Posterior vena cava (tissue), 2 donors: ENCODE measurements at regions of chr21 and their contacts with region 1.

Region 1: GRCh38 chr21:33441489-33442477 is 38.0 kb downstream of the TMEM50B start:
- DNase-seq: no peak

Region 2: GRCh38 chr21:33205476-33205875 is 236.3 kb before region 1 on chr21:
- intact Hi-C with region 1: loop called in 1 of 2 experiments (anchors 5 kb)
- DNase-seq: no peak